Activated B cell treated with CpG ODN at 0.5 μM for 24 hours (primary cell): ENCODE measurements at regions of chr12 and their contacts with region 1.

Region 1: GRCh38 chr12:133080368-133081158 is at the start of gene ZNF140:
- DNase-seq: peak; percentile 90
- ATAC-seq: peak; percentile 65
- H3K4me3 Mint-ChIP-seq: no peak within 1 kb of the TSS
- H3K27ac Mint-ChIP-seq: no peak within 1 kb of the TSS
- H3K4me1 Mint-ChIP-seq: peaks cover 12% of the 10 kb centered on the region
- H3K27me3 Mint-ChIP-seq: no peaks in the 10 kb centered on the region
- CTCF ChIP-seq: no peak
- total RNA-seq, gene ZNF140: 20.6 and 21.9 TPM in 2 replicates

Region 2: GRCh38 chr12:132771126-132771838 is 309.3 kb before region 1 on chr12:
- CTCF ChIA-PET with region 1: no interaction called
- POLR2A ChIA-PET with region 1: no interaction called
- intact Hi-C with region 1: loop called (anchors 2 kb)
- DNase-seq: peak; percentile 38
- ATAC-seq: peak; percentile 49
- H3K4me3 Mint-ChIP-seq: peak overlapping the region; percentile 62
- H3K27ac Mint-ChIP-seq: peak overlapping the region; percentile 94
- H3K4me1 Mint-ChIP-seq: peaks cover 68% of the 10 kb centered on the region
- H3K27me3 Mint-ChIP-seq: no peaks in the 10 kb centered on the region
- CTCF ChIP-seq: no peak

Region 3: GRCh38 chr12:132887513-132888351 is 192.8 kb before region 1 on chr12 and contains the start of gene CHFR:
- CTCF ChIA-PET with region 1: no interaction called
- POLR2A ChIA-PET with region 1: interaction called, 11 read pairs
- intact Hi-C with region 1: loop called (anchors 1 kb)
- DNase-seq: peak; percentile 90
- ATAC-seq: peak; percentile 98
- H3K4me3 Mint-ChIP-seq: peak within 1 kb of the TSS; percentile 98
- H3K27ac Mint-ChIP-seq: peak within 1 kb of the TSS; percentile 100
- H3K4me1 Mint-ChIP-seq: peaks cover 24% of the 10 kb centered on the region
- H3K27me3 Mint-ChIP-seq: peaks cover 7% of the 10 kb centered on the region
- CTCF ChIP-seq: no peak
- total RNA-seq, gene CHFR: 89.4 and 108 TPM in 2 replicates

Region 4: GRCh38 chr12:132956011-132956788 is 124.4 kb before region 1 on chr12 and contains the start of gene ZNF605:
- CTCF ChIA-PET with region 1: no interaction called
- POLR2A ChIA-PET with region 1: interaction called, 7 read pairs
- intact Hi-C with region 1: loop called (anchors 1 kb)
- DNase-seq: peak; percentile 87
- ATAC-seq: peak; percentile 89
- H3K4me3 Mint-ChIP-seq: peak within 1 kb of the TSS; percentile 96
- H3K27ac Mint-ChIP-seq: peak within 1 kb of the TSS; percentile 93
- H3K4me1 Mint-ChIP-seq: peaks cover 33% of the 10 kb centered on the region
- H3K27me3 Mint-ChIP-seq: no peaks in the 10 kb centered on the region
- CTCF ChIP-seq: no peak
- total RNA-seq, gene ZNF605: 12.2 and 15.4 TPM in 2 replicates

Region 5: GRCh38 chr12:133037207-133038005 is 43.2 kb before region 1 on chr12 and contains the start of gene ZNF84:
- CTCF ChIA-PET with region 1: no interaction called
- POLR2A ChIA-PET with region 1: interaction called, 30 read pairs
- intact Hi-C with region 1: loop called (anchors 1 kb)
- DNase-seq: peak; percentile 92
- ATAC-seq: peak; percentile 95
- H3K4me3 Mint-ChIP-seq: peak within 1 kb of the TSS; percentile 91
- H3K27ac Mint-ChIP-seq: peak within 1 kb of the TSS; percentile 96
- H3K4me1 Mint-ChIP-seq: peaks cover 20% of the 10 kb centered on the region
- H3K27me3 Mint-ChIP-seq: peaks cover 2% of the 10 kb centered on the region
- CTCF ChIP-seq: no peak
- total RNA-seq, gene ZNF84: 34.8 and 41.1 TPM in 2 replicates

Region 6: GRCh38 chr12:133135747-133136146 is 55.2 kb after region 1 on chr12:
- CTCF ChIA-PET with region 1: no interaction called
- POLR2A ChIA-PET with region 1: interaction called, 62 read pairs
- intact Hi-C with region 1: loop called (anchors 1 kb)
- DNase-seq: no peak
- ATAC-seq: no peak
- H3K4me3 Mint-ChIP-seq: no peak overlapping the region
- H3K27ac Mint-ChIP-seq: no peak overlapping the region
- H3K4me1 Mint-ChIP-seq: peaks cover 9% of the 10 kb centered on the region
- H3K27me3 Mint-ChIP-seq: no peaks in the 10 kb centered on the region
- CTCF ChIP-seq: no peak